Mammary epithelial cell (primary cell): ENCODE measurements at regions of chr12 and their contacts with region 1.

Region 1: DNA sequence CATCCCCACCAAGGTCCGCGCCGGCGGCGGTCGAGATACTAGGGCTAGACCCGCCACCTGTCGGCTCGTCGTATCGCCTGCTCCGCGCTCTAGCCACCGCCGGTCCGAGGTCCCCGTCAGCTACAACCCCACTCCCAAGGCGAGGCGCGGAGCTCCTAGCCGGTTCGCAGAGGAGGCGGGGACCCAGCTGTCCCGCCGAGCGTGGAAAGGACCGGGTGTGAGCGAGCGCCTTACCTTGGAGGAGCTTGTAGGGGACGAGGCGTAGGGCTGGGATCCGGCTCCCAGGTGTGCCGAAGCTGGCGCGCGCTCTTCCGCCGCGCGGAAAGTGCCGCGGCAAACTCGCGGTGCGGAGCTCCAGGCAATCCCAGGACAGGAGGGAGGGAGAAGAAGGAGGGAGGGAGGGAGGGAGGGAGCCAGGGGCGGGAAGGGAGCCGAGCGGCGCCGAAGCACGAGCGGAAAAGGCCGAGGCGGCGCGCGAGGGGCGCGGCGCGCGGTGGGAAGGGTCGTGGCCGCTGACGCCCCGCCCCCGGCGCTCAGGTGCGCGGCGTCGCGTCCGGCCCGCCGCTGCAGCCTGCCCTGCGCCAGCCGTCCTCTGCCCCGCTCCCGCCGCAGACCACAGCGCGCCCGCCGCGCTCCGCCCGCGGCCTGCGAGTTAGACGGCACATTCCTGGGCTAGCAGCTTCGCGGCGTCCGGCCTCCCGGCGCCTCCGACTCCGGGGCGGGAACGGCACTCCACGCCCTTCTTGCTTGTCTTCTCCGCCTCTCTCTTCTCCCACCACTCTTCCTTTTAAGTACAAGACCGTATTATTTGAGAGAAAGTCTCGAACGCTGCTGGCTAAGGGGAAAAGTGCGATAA is at the start of gene PAWR:
- DNase-seq: peak; percentile 94
- H3K4me3 ChIP-seq: peak within 1 kb of the TSS; percentile 73 to 81 (median 78)
- H3K27ac ChIP-seq: peak within 1 kb of the TSS; percentile 99
- H3K4me1 ChIP-seq: peaks cover 20% of the 10 kb centered on the region
- H3K27me3 ChIP-seq: no peaks in the 10 kb centered on the region
- CTCF ChIP-seq: peak in 1 of 2 donors; percentile 41
- total RNA-seq, gene PAWR: 108 to 179 TPM

Region 2: DNA sequence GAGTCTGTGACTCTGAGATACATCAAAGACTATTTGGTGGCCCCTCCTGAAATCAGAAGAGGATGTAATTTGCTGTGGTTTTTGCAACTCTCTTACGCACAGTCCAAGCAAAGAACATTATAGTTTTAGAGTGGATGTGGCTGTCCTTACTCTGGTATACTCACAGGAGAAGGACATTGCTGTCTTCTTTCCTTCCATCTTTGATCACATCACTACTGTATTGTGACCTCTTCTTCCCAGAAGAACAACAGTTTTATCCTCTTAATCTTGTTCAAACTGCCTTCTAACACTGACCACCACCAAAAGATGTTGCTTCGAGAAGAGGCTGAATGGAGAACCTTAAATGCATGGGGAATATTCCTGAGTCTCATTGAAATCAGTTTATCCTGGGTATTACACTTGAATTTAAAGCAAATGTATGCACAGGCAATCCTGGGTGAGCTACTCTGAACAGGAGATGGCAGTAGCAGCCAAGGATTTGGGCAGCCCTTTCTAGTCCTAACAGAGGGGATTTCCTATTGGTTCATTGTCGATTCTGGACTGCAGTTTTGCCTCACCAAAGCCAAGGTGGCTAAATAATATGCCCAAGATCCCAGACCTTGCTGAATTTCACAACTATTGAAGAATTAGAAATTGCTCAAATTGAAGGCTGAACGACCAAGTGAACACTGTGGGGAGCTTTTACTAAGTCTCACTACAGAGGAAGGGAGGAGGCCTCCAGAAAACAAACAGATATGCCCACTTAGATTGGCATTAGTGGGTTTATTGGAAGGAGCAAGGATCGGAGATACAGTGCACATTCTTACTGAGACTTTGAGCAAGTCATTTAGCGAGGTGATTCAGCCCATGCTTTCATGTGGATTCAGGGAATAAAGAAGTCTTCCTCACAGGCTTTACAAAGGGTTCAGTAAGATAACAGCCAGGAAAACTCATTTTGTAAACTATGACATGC is 282.9 kb before region 1 on chr12:
- CTCF ChIA-PET with region 1: interaction called, 3 read pairs
- dilution Hi-C with region 1: no loop called
- in situ Hi-C with region 1: no loop called
- intact Hi-C with region 1: loop called (anchors 2 kb)
- DNase-seq: peak; percentile 81
- H3K4me3 ChIP-seq: no peak overlapping the region
- H3K27ac ChIP-seq: peak overlapping the region; percentile 20
- H3K4me1 ChIP-seq: peaks cover 38% of the 10 kb centered on the region
- H3K27me3 ChIP-seq: no peaks in the 10 kb centered on the region
- CTCF ChIP-seq: peak; percentile 83 to 90

Region 3: GRCh38 chr12:79547735-79548609 is 142.9 kb before region 1 on chr12:
- CTCF ChIA-PET with region 1: interaction called, 8 read pairs
- dilution Hi-C with region 1: no loop called
- in situ Hi-C with region 1: no loop called
- intact Hi-C with region 1: loop called (anchors 1 kb)
- DNase-seq: no peak
- H3K4me3 ChIP-seq: peak overlapping the region in 1 of 3 experiments; percentile 9
- H3K27ac ChIP-seq: peak overlapping the region; percentile 90
- H3K4me1 ChIP-seq: peaks cover 35% of the 10 kb centered on the region
- H3K27me3 ChIP-seq: no peaks in the 10 kb centered on the region
- CTCF ChIP-seq: peak; percentile 55 to 72

Region 4: DNA sequence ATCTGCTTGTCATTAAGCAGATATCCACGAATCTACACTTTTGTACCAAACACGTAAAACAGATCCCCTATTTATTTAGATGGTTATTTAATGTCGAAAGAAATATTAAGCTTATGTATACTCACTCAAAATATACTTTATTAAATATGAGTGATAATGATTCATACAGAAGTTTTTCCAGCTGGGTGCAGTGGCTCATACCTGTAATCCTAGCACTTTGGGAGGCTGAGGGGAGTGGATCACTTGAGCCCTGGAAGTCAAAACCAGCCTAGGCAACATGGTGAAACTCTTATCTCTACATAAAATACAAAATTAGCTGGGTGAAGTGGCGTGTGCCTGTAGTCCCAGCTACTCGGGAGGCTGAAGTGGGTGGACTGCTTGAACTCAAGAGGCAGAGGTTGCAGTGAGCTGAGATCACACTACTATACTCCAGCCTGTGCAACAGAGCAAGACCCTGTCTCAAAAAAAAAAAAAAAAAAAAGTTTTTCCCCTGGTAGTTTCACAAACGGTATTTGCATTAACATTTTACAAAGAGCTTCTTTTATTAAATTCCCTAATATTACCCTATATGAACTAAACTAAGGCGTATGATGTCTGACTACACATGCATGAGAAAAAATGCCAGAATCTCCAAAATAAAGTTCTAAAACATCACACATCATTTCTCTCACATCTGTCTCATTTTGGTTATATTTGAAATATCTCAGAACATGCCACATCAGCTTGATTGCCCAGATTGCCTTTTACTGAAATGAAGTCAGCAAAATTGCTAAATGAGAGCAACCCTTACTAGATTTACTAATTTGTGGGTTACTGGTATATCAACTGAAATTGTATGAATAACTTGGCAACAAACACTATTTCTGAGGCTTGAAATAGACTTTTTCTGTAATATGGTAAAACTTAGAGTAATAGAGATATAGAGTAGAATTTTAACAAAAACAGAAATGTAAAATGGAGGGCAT is 75.0 kb before region 1 on chr12:
- CTCF ChIA-PET with region 1: no interaction called
- dilution Hi-C with region 1: no loop called
- in situ Hi-C with region 1: no loop called
- intact Hi-C with region 1: loop called (anchors 2 kb)
- DNase-seq: peak; percentile 56
- H3K4me3 ChIP-seq: no peak overlapping the region
- H3K27ac ChIP-seq: no peak overlapping the region
- H3K4me1 ChIP-seq: peaks cover 18% of the 10 kb centered on the region
- H3K27me3 ChIP-seq: no peaks in the 10 kb centered on the region
- CTCF ChIP-seq: no peak

Region 5: DNA sequence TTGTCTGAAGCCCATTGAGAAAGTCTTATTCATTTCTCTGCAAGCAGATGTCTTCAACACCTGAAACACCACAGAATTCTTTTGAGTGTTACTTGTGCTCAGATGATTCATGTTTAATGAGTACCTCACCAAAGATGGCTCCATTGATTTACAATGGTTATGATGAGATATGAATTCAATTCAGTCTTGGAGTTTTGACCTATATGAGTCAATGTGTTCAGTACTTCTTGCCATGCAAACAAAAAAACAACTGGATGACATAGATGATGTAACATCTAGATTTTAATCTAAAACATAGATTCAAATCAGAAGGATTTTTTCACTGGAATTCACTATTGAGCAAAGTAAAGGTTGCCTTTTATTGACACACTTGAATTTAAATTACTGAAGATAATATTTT is 15.3 kb after region 1 on chr12:
- CTCF ChIA-PET with region 1: no interaction called
- dilution Hi-C with region 1: no loop called
- in situ Hi-C with region 1: no loop called
- intact Hi-C with region 1: loop called (anchors 1 kb)
- DNase-seq: peak; percentile 92
- H3K4me3 ChIP-seq: no peak overlapping the region
- H3K27ac ChIP-seq: peak overlapping the region; percentile 41
- H3K4me1 ChIP-seq: peaks cover 13% of the 10 kb centered on the region
- H3K27me3 ChIP-seq: no peaks in the 10 kb centered on the region
- CTCF ChIP-seq: no peak

Region 6: GRCh38 chr12:79776111-79776510 is 85.2 kb after region 1 on chr12:
- CTCF ChIA-PET with region 1: no interaction called
- dilution Hi-C with region 1: loop called (anchors 5 kb)
- in situ Hi-C with region 1: no loop called
- intact Hi-C with region 1: no loop called
- DNase-seq: peak; percentile 52
- H3K4me3 ChIP-seq: no peak overlapping the region
- H3K27ac ChIP-seq: peak overlapping the region; percentile 57
- H3K4me1 ChIP-seq: peaks cover 15% of the 10 kb centered on the region
- H3K27me3 ChIP-seq: no peaks in the 10 kb centered on the region
- CTCF ChIP-seq: no peak

Region 7: GRCh38 chr12:80186727-80187217 is 495.9 kb after region 1 on chr12:
- CTCF ChIA-PET with region 1: no interaction called
- dilution Hi-C with region 1: no loop called
- in situ Hi-C with region 1: no loop called
- intact Hi-C with region 1: loop called (anchors 2 kb)
- DNase-seq: peak; percentile 82
- H3K4me3 ChIP-seq: no peak overlapping the region
- H3K27ac ChIP-seq: peak overlapping the region; percentile 70
- H3K4me1 ChIP-seq: peaks cover 10% of the 10 kb centered on the region
- H3K27me3 ChIP-seq: no peaks in the 10 kb centered on the region
- CTCF ChIP-seq: peak; percentile 85 to 87